ENCODE measurements at regions of chr13 and their contacts with region 1.

Region 1: GRCh38 chr13:25253687-25254086 is 33.6 kb downstream of the MTMR6 start:
- DNase-seq: no peak
- ATAC-seq: no peak
- H3K4me3 ChIP-seq: no peak overlapping the region
- H3K4me3 Mint-ChIP-seq: no peak overlapping the region
- H3K27ac ChIP-seq: no peak overlapping the region
- H3K27ac Mint-ChIP-seq: no peak overlapping the region
- H3K4me1 ChIP-seq: peaks cover 0 to 4% of the 10 kb centered on the region in 2 donors
- H3K4me1 Mint-ChIP-seq: peaks cover 3% of the 10 kb centered on the region
- H3K27me3 ChIP-seq: no peaks in the 10 kb centered on the region
- H3K27me3 Mint-ChIP-seq: no peaks in the 10 kb centered on the region
- CTCF ChIP-seq: no peak

Region 2: GRCh38 chr13:25319771-25320170 is 66.1 kb after region 1 on chr13:
- CTCF ChIA-PET with region 1: no interaction called
- POLR2A ChIA-PET with region 1: no interaction called
- intact Hi-C with region 1: loop called (anchors 5 kb)
- DNase-seq: no peak
- ATAC-seq: no peak
- H3K4me3 ChIP-seq: no peak overlapping the region
- H3K4me3 Mint-ChIP-seq: no peak overlapping the region
- H3K27ac ChIP-seq: no peak overlapping the region
- H3K27ac Mint-ChIP-seq: no peak overlapping the region
- H3K4me1 ChIP-seq: no peaks in the 10 kb centered on the region
- H3K4me1 Mint-ChIP-seq: no peaks in the 10 kb centered on the region
- H3K27me3 ChIP-seq: no peaks in the 10 kb centered on the region
- H3K27me3 Mint-ChIP-seq: no peaks in the 10 kb centered on the region
- CTCF ChIP-seq: no peak

Measured in B cell (primary cell).